Natural killer cell (primary cell): ENCODE measurements at regions of chr20 and their contacts with region 1.

Region 1: GRCh38 chr20:4956200-4956810 is 45.0 kb downstream of the SLC23A2 start:
- DNase-seq: peak in 1 of 2 donors; percentile 82
- ATAC-seq: peak; percentile 76 to 89 (median 79)
- H3K4me3 ChIP-seq: no peak overlapping the region
- H3K4me3 Mint-ChIP-seq: no peak overlapping the region
- H3K27ac ChIP-seq: no peak overlapping the region
- H3K27ac Mint-ChIP-seq: no peak overlapping the region
- H3K4me1 ChIP-seq: peaks cover 4% of the 10 kb centered on the region
- H3K4me1 Mint-ChIP-seq: peaks cover 1 to 7% of the 10 kb centered on the region in 2 donors
- H3K27me3 ChIP-seq: no peaks in the 10 kb centered on the region
- H3K27me3 Mint-ChIP-seq: no peaks in the 10 kb centered on the region
- CTCF ChIP-seq: peak; percentile 75

Region 2: GRCh38 chr20:4607287-4607713 is 349.0 kb before region 1 on chr20:
- intact Hi-C with region 1: loop called (anchors 10 kb)
- DNase-seq: peak; percentile 36 to 80
- ATAC-seq: peak; percentile 80 to 89 (median 88)
- H3K4me3 ChIP-seq: no peak overlapping the region
- H3K4me3 Mint-ChIP-seq: no peak overlapping the region
- H3K27ac ChIP-seq: no peak overlapping the region
- H3K27ac Mint-ChIP-seq: no peak overlapping the region
- H3K4me1 ChIP-seq: peaks cover 4% of the 10 kb centered on the region
- H3K4me1 Mint-ChIP-seq: peaks cover 5% of the 10 kb centered on the region in 2 donors
- H3K27me3 ChIP-seq: no peaks in the 10 kb centered on the region
- H3K27me3 Mint-ChIP-seq: peaks cover 5 to 29% of the 10 kb centered on the region in 2 donors
- CTCF ChIP-seq: peak; percentile 95

Region 3: DNA sequence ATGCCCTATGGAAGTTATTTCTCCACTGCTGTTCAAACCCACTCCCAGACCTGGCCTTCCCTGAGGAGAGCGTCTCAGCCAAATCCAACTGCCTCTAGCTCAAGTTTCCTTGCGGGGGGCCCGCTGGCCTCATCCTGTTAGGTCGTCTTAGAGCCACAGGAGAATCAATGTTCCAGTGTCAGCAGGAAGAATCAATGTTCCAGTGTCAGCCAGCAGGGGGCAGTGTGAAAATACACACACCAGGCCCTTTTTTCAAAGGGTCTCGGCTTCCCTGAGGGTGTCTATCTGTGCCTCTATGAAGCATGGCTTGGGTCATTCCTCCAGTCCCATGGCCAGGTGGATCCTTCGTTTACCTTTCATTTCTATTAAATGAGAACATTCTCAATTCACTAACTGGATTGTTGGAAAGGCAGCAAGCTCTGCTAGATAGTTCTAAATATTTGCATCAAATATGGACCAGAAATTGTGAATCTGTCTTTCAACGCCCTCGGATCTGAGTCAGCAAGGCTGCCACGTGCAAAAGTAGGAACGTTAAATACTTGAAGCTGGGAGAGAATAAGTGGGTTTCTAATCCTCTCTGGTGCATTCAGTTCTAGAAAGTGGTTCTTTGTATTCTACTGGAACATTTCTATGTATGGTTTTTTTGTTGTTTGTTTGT is 215.4 kb before region 1 on chr20:
- intact Hi-C with region 1: loop called (anchors 2 kb)
- DNase-seq: peak; percentile 60 to 80
- ATAC-seq: peak; percentile 66 to 72 (median 66)
- H3K4me3 ChIP-seq: no peak overlapping the region
- H3K4me3 Mint-ChIP-seq: no peak overlapping the region
- H3K27ac ChIP-seq: no peak overlapping the region
- H3K27ac Mint-ChIP-seq: no peak overlapping the region
- H3K4me1 ChIP-seq: no peaks in the 10 kb centered on the region
- H3K4me1 Mint-ChIP-seq: peaks cover 5 to 6% of the 10 kb centered on the region in 2 donors
- H3K27me3 ChIP-seq: no peaks in the 10 kb centered on the region
- H3K27me3 Mint-ChIP-seq: peaks cover 16 to 19% of the 10 kb centered on the region in 2 donors
- CTCF ChIP-seq: peak; percentile 96

Region 4: DNA sequence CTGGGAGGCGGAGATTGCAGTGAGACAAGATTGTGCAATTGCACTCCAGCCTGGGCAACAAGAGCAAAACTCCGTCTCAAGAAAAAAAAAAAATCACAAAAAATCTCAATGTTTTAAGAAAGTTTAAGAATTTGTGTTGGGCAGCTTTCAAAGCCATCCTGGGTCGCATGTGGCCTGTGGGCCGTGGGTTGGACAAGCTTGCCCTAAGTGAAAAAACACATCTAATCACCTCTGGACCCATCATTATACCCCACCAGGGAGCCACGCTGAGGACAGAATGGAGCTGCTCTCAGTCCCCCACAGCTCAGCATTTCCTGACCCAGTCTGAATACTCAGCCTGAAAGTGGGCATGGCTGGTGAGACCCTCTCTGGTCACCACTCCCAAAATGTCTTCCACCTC is 105.3 kb before region 1 on chr20:
- intact Hi-C with region 1: no loop called
- DNase-seq: no peak
- ATAC-seq: no peak
- H3K4me3 ChIP-seq: no peak overlapping the region
- H3K4me3 Mint-ChIP-seq: no peak overlapping the region
- H3K27ac ChIP-seq: no peak overlapping the region
- H3K27ac Mint-ChIP-seq: no peak overlapping the region
- H3K4me1 ChIP-seq: no peaks in the 10 kb centered on the region
- H3K4me1 Mint-ChIP-seq: no peaks in the 10 kb centered on the region
- H3K27me3 ChIP-seq: no peaks in the 10 kb centered on the region
- H3K27me3 Mint-ChIP-seq: no peaks in the 10 kb centered on the region
- CTCF ChIP-seq: no peak

Region 5: GRCh38 chr20:5056801-5057599 is 100.7 kb after region 1 on chr20:
- intact Hi-C with region 1: no loop called
- DNase-seq: peak; percentile 67 to 89
- ATAC-seq: peak; percentile 95 to 99 (median 97)
- H3K4me3 ChIP-seq: no peak overlapping the region
- H3K4me3 Mint-ChIP-seq: peak overlapping the region; percentile 18
- H3K27ac ChIP-seq: peak overlapping the region; percentile 26
- H3K27ac Mint-ChIP-seq: peak overlapping the region; percentile 80 to 97
- H3K4me1 ChIP-seq: peaks cover 23% of the 10 kb centered on the region
- H3K4me1 Mint-ChIP-seq: peaks cover 31 to 39% of the 10 kb centered on the region in 2 donors
- H3K27me3 ChIP-seq: no peaks in the 10 kb centered on the region
- H3K27me3 Mint-ChIP-seq: no peaks in the 10 kb centered on the region
- CTCF ChIP-seq: peak; percentile 59

Region 6: DNA sequence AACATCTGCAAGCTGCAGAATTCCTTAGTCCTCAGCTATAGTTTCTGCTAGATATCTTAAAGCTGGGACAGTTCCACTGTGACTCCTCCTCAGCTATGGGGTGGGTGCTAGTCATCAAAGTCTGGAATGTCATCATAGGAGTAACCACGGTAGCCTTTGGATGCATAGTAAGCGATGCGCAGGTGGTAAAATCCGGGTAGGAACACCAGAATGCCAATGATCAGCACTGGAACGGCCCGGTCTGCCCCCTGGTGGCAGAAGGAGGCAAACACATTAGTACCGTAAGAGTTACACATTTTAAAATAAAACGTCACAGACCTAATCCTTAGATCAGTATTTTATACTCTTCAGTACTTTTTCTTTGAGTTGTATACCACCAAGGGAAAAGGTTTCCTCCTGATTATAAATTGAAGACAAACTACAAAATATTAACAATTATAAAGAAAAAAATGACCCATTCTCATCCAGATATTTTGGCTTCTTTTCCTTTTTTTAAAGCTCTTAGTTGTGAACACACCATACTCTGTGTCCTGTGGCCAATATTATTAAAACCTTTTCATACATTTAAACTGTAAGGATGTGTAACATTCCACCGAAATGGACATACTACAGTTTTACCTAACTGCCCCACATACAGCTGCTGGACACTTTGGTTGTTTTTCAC is 144.5 kb after region 1 on chr20:
- intact Hi-C with region 1: loop called (anchors 2 kb)
- DNase-seq: peak; percentile 72 to 86
- ATAC-seq: peak; percentile 84 to 98 (median 89)
- H3K4me3 ChIP-seq: no peak overlapping the region
- H3K4me3 Mint-ChIP-seq: no peak overlapping the region
- H3K27ac ChIP-seq: no peak overlapping the region
- H3K27ac Mint-ChIP-seq: peak overlapping the region; percentile 72 to 74
- H3K4me1 ChIP-seq: peaks cover 4% of the 10 kb centered on the region
- H3K4me1 Mint-ChIP-seq: peaks cover 17% of the 10 kb centered on the region in 2 donors
- H3K27me3 ChIP-seq: no peaks in the 10 kb centered on the region
- H3K27me3 Mint-ChIP-seq: no peaks in the 10 kb centered on the region
- CTCF ChIP-seq: peak; percentile 97